Heart left ventricle (tissue), 16 donors: ENCODE measurements at regions of chr4 and their contacts with region 1.

Region 1: GRCh38 chr4:174222266-174222872 is 61.1 kb downstream of the FBXO8 start:
- DNase-seq: no peak
- ATAC-seq: no peak
- H3K4me3 ChIP-seq: no peak overlapping the region
- H3K27ac ChIP-seq: no peak overlapping the region
- H3K4me1 ChIP-seq: peaks cover 0 to 12% (median 4%) of the 10 kb centered on the region in 12 donors
- H3K27me3 ChIP-seq: peaks cover 0 to 33% (median 5%) of the 10 kb centered on the region in 9 donors
- CTCF ChIP-seq: peak; percentile 40 to 65 (median 55)
- POLR2A ChIP-seq: no peak

Region 2: DNA sequence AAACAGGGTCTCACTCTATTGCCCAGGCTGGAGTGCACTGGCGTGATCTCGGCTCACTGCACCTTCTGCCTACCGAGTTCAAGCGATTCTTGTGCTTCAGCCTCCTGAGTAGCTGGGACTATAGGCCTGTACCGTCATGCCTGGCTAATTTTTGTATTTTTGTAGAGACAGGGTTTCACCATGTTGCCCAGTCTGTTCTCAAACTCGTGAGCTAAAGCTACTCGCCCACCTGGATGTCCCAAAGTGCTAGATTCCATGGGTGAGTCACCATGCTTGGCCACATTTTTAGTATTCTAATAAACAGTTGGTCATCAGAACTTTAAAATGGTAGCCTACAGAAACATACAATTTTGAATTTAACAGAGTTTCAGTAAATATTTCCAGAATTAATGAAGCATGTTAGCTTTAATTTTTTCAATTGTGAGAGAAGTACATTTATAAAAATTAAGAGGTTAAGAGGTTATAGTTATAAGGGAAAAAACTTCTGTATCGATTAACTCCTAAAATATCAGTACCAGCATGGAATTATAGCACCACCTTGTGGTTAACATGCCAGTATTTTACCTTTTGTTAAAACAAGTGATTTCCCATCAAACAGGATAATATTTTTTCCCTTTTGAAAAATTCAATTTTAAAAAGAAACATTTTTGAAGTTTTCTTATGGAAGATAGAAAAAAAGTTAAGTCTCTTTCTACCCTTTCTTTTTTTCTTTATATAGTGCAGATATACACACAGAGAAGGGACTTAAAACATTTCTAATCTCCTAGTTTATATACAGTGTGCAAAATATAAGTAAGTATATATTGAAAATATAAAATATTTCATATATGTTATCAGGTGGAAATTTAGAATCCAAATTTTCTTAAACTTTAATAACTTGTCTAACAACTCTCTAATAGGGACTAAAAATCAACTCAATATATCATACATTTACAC is 96.7 kb after region 1 on chr4:
- intact Hi-C with region 1: loop called in 9 of 10 experiments (anchors 5 to 10 kb)
- DNase-seq: no peak
- ATAC-seq: no peak
- H3K4me3 ChIP-seq: no peak overlapping the region
- H3K27ac ChIP-seq: no peak overlapping the region
- H3K4me1 ChIP-seq: no peaks in the 10 kb centered on the region
- H3K27me3 ChIP-seq: no peaks in the 10 kb centered on the region
- CTCF ChIP-seq: peak; percentile 61 to 79 (median 68)
- POLR2A ChIP-seq: no peak

Region 3: GRCh38 chr4:174324725-174325124 is 102.4 kb after region 1 on chr4:
- intact Hi-C with region 1: loop called in 9 of 10 experiments (anchors 5 to 10 kb)
- DNase-seq: no peak
- ATAC-seq: no peak
- H3K4me3 ChIP-seq: no peak overlapping the region
- H3K27ac ChIP-seq: no peak overlapping the region
- H3K4me1 ChIP-seq: no peaks in the 10 kb centered on the region
- H3K27me3 ChIP-seq: no peaks in the 10 kb centered on the region
- CTCF ChIP-seq: no peak
- POLR2A ChIP-seq: no peak

Region 4: GRCh38 chr4:174919886-174920423 is 697.6 kb after region 1 on chr4:
- intact Hi-C with region 1: no loop called
- DNase-seq: no peak
- ATAC-seq: no peak
- H3K4me3 ChIP-seq: no peak overlapping the region
- H3K27ac ChIP-seq: no peak overlapping the region
- H3K4me1 ChIP-seq: no peaks in the 10 kb centered on the region
- H3K27me3 ChIP-seq: no peaks in the 10 kb centered on the region
- CTCF ChIP-seq: no peak
- POLR2A ChIP-seq: no peak